Endothelial cell of umbilical vein (primary cell): ENCODE measurements at regions of chr1 and their contacts with region 1.

Region 1: DNA sequence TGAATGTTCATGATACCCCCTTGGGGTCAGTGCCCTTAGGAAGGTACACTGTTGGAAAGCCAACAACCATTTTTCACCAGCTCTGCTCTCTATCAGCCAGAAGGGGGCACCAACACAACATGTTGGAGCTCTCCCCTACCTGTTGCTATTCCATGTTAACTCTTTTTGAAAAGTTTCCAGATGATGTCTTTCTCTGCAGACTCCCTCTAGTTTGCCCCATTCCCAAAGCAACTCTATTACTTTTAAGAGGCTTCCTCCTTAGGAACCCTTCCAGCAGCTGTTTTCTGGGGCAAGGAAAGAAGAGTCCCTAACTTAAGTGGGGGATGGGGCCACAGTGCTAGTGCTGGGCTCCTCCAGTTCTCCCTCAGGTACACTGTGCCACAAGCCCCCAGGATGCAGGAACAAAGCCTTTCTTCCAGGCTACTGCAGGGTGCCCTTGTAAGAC is 22.9 kb upstream of the NDC1 start:
- DNase-seq: peak; percentile 51
- H3K4me3 ChIP-seq: no peak overlapping the region
- H3K27ac ChIP-seq: no peak overlapping the region
- H3K4me1 ChIP-seq: no peaks in the 10 kb centered on the region
- H3K27me3 ChIP-seq: no peaks in the 10 kb centered on the region
- CTCF ChIP-seq: peak; percentile 79 to 85
- POLR2A ChIP-seq: no peak

Region 2: DNA sequence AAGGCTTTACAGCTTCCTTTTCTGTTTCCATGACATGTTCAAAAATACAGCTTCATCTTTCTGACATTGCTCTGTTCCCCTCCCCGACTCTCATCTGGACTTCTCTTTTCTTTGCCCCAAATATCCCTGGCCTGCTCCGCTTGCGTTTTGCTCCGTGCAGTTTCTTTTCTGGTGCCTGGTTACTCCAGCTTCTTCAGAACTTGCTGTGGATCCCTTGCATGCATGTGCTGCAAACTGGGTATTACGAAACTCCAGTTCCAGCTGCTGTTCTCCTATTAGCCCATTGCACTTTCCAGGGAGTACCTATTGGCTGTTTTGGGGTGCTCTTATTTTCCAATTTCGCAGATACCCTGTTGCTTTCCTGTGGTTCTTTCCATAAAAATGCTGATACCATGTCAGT is 13.0 kb before region 1 on chr1:
- CTCF ChIA-PET with region 1: interaction called, 27 read pairs
- POLR2A ChIA-PET with region 1: no interaction called
- dilution Hi-C with region 1: no loop called
- intact Hi-C with region 1: no loop called
- DNase-seq: no peak
- H3K4me3 ChIP-seq: no peak overlapping the region
- H3K27ac ChIP-seq: no peak overlapping the region
- H3K4me1 ChIP-seq: no peaks in the 10 kb centered on the region
- H3K27me3 ChIP-seq: no peaks in the 10 kb centered on the region
- CTCF ChIP-seq: no peak
- POLR2A ChIP-seq: no peak

Region 3: DNA sequence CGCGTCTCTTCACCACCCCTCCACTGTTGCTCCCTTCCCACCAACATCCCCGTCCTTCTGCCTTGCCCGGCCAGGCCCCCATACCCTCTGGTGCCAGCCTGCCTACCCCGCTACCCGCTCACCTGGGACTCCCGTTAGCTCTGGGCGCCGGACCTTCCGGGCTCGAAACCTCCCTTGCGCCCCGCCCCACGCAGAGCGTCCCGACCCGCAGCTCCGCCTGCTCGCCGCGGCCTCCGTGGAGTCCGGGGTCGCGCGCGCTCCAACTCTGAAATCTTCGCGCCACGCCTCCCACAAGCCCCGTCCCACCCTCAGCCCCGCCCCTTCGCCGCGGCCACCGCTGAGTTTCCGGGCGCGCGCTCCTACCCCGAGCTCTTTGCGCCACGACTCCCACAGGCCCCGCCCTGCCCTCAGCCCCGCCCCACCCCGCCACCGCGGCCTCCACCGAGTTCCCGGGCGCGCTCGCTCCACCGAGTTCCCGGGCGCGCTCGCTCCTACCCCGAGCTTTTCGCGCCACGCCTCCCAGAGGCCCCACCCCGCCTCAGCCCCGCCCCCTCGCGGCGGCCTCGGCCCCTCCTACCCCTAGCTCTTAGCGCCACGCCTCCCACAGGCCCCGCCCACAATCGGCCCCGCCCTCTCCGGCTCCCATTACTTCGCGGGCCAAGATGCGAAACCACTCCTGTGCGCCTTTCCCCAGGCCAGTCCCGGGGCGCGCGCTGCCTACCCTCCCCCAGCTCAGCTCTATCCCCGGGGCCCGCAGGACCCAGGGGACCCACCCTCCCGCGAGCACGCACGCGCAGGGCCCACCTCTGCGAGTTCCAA is 84.7 kb after region 1 on chr1 and contains the start of gene IFT25:
- CTCF ChIA-PET with region 1: interaction called, 81 read pairs
- POLR2A ChIA-PET with region 1: no interaction called
- dilution Hi-C with region 1: no loop called
- intact Hi-C with region 1: loop called (anchors 1 kb)
- DNase-seq: peak; percentile 95
- H3K4me3 ChIP-seq: peak within 1 kb of the TSS; percentile 88 to 95 (median 91)
- H3K27ac ChIP-seq: peak within 1 kb of the TSS; percentile 43
- H3K4me1 ChIP-seq: peaks cover 20% of the 10 kb centered on the region
- H3K27me3 ChIP-seq: no peaks in the 10 kb centered on the region
- CTCF ChIP-seq: no peak
- POLR2A ChIP-seq: peak; percentile 77
- total RNA-seq, gene IFT25: 31.4 and 34.0 TPM in 2 replicates

Region 4: GRCh38 chr1:53959664-53960250 is 98.8 kb after region 1 on chr1:
- CTCF ChIA-PET with region 1: interaction called, 67 read pairs
- POLR2A ChIA-PET with region 1: no interaction called
- dilution Hi-C with region 1: no loop called
- intact Hi-C with region 1: loop called (anchors 1 kb)
- DNase-seq: peak; percentile 28
- H3K4me3 ChIP-seq: no peak overlapping the region
- H3K27ac ChIP-seq: no peak overlapping the region
- H3K4me1 ChIP-seq: peaks cover 7% of the 10 kb centered on the region
- H3K27me3 ChIP-seq: no peaks in the 10 kb centered on the region
- CTCF ChIP-seq: peak; percentile 19 to 25
- POLR2A ChIP-seq: no peak

Region 5: GRCh38 chr1:54081306-54082270 is 220.6 kb after region 1 on chr1:
- CTCF ChIA-PET with region 1: interaction called, 27 read pairs
- POLR2A ChIA-PET with region 1: no interaction called
- dilution Hi-C with region 1: no loop called
- intact Hi-C with region 1: loop called (anchors 1 kb)
- DNase-seq: peak; percentile 59
- H3K4me3 ChIP-seq: no peak overlapping the region
- H3K27ac ChIP-seq: no peak overlapping the region
- H3K4me1 ChIP-seq: no peaks in the 10 kb centered on the region
- H3K27me3 ChIP-seq: no peaks in the 10 kb centered on the region
- CTCF ChIP-seq: peak; percentile 85 to 92
- POLR2A ChIP-seq: no peak

Region 6: GRCh38 chr1:54810100-54810942 is 949.3 kb after region 1 on chr1:
- CTCF ChIA-PET with region 1: interaction called, 16 read pairs
- POLR2A ChIA-PET with region 1: no interaction called
- dilution Hi-C with region 1: no loop called
- intact Hi-C with region 1: loop called (anchors 5 kb)
- DNase-seq: peak; percentile 54
- H3K4me3 ChIP-seq: no peak overlapping the region
- H3K27ac ChIP-seq: no peak overlapping the region
- H3K4me1 ChIP-seq: no peaks in the 10 kb centered on the region
- H3K27me3 ChIP-seq: no peaks in the 10 kb centered on the region
- CTCF ChIP-seq: peak; percentile 76 to 89
- POLR2A ChIP-seq: no peak